ENCODE measurements at regions of chr3 and their contacts with region 1.

Region 1: GRCh38 chr3:57939775-57940174 is 68.4 kb upstream of the FLNB start:
- DNase-seq: no peak
- H3K4me3 ChIP-seq: no peak overlapping the region
- H3K27ac ChIP-seq: no peak overlapping the region
- H3K4me1 ChIP-seq: 0 out of 2 replicates have a peak, but pooled peaks cover 5% of the 10 kb centered on the region
- H3K27me3 ChIP-seq: no peaks in the 10 kb centered on the region
- CTCF ChIP-seq: no peak

Region 2: DNA sequence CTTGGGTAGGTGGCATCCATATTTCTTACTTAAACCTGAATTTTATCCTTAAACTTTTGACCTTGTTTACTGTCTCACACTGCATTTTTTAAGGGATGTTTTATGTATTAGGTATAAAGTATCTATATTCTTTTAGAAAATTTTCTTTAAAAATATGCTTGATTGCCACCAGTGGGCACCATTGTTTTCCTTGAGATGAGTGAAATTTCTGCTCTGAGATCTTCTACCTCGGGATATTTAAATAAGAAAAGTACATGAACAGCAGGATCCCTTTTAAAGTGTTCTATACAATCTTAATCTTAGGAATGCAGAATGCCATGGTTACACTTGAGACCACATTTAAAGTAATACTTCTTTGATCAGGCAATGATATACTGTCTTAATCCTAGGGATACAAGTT is 74.9 kb before region 1 on chr3:
- CTCF ChIA-PET with region 1: no interaction called
- POLR2A ChIA-PET with region 1: no interaction called
- intact Hi-C with region 1: no loop called
- DNase-seq: no peak
- H3K4me3 ChIP-seq: no peak overlapping the region
- H3K27ac ChIP-seq: 0 out of 2 replicates have a peak overlapping the region, but pooled peaks have one; percentile 9
- H3K4me1 ChIP-seq: no peaks in the 10 kb centered on the region
- H3K27me3 ChIP-seq: no peaks in the 10 kb centered on the region
- CTCF ChIP-seq: peak; percentile 64

Region 3: GRCh38 chr3:57919987-57920386 is 19.8 kb before region 1 on chr3:
- CTCF ChIA-PET with region 1: interaction called, 10 read pairs
- POLR2A ChIA-PET with region 1: no interaction called
- intact Hi-C with region 1: no loop called
- DNase-seq: no peak
- H3K4me3 ChIP-seq: no peak overlapping the region
- H3K27ac ChIP-seq: no peak overlapping the region
- H3K4me1 ChIP-seq: no peaks in the 10 kb centered on the region
- H3K27me3 ChIP-seq: no peaks in the 10 kb centered on the region
- CTCF ChIP-seq: no peak